Cardiac septum (tissue), 1 donor: ENCODE measurements at regions of chr22 and their contacts with region 1.

Region 1: DNA sequence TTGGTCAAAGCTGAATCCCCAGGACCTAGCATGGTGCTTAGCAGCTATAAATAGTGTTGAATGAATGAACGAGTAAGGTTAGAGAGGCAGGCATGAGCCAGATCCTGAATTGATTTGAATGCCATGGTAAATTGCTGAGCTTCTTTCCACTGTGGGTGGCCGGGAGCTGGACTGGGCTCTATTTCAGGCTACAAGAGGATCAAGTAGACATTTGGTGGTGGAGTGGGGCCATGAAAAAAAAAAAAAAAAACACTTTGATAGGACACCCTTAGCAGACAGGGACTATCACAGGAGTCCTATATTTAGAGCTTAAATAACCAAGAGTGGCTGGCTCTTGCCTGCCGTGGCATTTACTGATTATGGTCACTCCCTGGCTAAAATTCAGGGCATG is 77.6 kb downstream of the MIAT start:
- DNase-seq: no peak

Region 2: GRCh38 chr22:26828311-26828710 is 93.3 kb after region 1 on chr22:
- intact Hi-C with region 1: no loop called
- DNase-seq: no peak

Region 3: DNA sequence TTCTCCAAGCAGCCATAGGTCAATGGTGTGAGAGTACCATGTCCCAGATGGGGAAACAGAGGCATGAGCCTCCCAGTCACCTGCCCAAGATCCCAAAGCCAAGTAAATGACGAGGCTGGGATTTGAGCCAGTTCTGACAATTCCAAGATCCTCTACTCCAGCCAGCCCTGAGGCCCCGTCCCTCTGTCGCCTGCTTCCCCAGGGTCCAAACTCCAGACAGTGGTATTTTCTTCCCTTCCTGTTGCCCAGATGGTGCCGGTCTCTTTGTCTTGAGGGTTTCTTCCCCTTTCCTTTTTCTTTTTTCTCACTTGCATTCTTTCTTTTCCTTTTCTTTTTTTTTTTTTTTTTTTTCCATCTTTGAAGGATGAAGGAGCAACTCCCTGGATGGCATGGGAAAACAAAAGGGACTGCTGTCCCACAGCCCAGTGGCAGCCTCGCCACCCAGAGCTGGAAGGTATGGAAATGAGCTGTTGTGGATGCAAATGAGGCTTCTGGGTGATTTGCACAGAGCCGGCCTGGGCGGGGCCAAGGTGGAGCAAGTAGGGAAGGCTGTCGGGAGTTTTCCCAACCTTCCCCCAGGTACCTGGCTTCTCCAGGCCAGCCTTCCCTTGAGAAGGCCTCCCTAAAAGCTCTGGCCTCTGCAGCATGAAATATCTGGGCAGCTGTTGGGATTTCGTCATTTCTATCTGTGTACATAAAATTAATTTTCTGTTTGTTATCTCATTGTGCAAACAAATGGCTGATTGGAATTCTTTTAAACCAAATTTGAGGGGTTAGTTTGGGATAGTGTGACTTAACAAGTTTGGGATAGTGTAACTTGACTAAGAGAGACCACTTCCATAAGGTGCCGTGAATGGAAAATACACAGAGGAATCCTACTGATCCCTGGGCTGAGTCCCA is 919.8 kb after region 1 on chr22:
- intact Hi-C with region 1: loop called (anchors 10 kb)
- DNase-seq: peak; percentile 24